Esophagus muscularis mucosa (tissue), 4 donors: ENCODE measurements at regions of chr4 and their contacts with region 1.

Region 1: DNA sequence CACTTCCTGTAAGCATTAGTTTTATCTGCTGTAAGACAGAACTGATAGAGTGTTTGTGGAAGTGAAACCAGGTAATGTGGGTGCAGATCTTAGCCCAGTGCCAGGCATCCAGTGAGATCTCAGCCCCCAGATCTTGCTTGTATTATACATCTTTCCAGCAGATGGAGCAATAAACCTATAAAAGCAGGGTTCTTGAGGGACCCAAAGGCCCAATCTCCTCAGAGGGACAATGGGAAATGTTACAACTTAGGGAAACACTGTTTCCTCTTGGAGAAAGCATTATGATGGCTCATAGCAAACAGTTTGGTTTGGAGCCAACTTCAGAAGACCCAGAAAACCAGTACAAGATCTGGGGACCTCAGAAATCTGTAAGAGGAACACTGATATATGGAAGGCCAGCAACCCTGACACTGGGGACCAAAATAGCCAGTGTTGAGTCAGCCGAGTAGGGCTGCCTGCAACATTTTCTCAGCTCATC is 206.3 kb downstream of the SLC7A11 start:
- DNase-seq: no peak
- H3K4me3 ChIP-seq: no peak overlapping the region
- H3K27ac ChIP-seq: no peak overlapping the region
- H3K4me1 ChIP-seq: peaks cover 0 to 3% (median 0%) of the 10 kb centered on the region in 4 donors
- H3K27me3 ChIP-seq: no peaks in the 10 kb centered on the region
- CTCF ChIP-seq: peak; percentile 56 to 62 (median 58)
- EP300 ChIP-seq: no peak
- POLR2A ChIP-seq: no peak

Region 2: GRCh38 chr4:136881666-136882065 is 1154.2 kb before region 1 on chr4:
- intact Hi-C with region 1: no loop called
- DNase-seq: no peak
- H3K4me3 ChIP-seq: no peak overlapping the region
- H3K27ac ChIP-seq: no peak overlapping the region
- H3K4me1 ChIP-seq: no peaks in the 10 kb centered on the region
- H3K27me3 ChIP-seq: no peaks in the 10 kb centered on the region
- CTCF ChIP-seq: no peak
- EP300 ChIP-seq: no peak
- POLR2A ChIP-seq: no peak

Region 3: GRCh38 chr4:138090150-138090917 is 54.5 kb after region 1 on chr4:
- intact Hi-C with region 1: loop called (anchors 5 kb)
- DNase-seq: no peak
- H3K4me3 ChIP-seq: peak overlapping the region; percentile 29 to 47 (median 34)
- H3K27ac ChIP-seq: no peak overlapping the region
- H3K4me1 ChIP-seq: peaks cover 7 to 29% (median 16%) of the 10 kb centered on the region in 4 donors
- H3K27me3 ChIP-seq: no peaks in the 10 kb centered on the region
- CTCF ChIP-seq: peak; percentile 69 to 86 (median 84)
- EP300 ChIP-seq: no peak
- POLR2A ChIP-seq: no peak

Region 4: DNA sequence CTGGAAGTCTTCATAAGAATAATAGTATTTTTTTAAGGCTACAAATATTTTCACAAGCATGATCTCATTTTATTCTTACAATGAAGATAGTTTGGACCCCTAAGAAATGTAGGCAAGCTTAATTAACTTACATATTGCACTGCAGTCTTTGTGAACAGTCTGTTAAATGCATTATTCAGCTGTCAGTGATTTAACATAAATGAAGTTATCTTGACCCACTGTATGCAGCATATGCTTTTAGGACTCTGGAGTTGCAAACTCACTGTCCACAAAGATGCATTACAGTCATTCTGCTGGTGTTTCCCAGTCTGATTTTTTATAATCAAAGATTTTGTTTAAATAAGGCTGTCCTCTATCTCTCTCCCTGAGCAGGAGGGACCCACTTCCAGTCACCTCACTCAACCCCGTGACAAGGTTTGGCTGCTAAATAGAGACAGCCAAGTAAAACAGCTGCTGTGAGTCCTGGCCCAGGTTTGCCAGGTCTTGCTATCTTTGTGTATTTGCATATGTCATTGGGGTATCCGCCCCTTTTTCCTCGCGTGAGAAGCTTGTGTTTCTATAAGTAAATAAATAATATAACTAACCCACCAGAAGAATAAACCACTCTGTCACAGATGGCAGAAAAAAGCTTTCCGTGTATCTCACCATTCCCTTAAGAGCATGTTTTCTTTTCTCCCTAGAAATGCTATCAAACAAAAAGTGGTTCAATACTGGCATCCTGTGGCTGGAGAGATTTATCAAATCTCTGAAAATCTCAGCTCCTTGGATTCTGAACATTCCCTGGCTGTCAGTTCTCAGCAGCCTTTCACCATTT is 139.4 kb after region 1 on chr4:
- intact Hi-C with region 1: loop called (anchors 5 kb)
- DNase-seq: no peak
- H3K4me3 ChIP-seq: no peak overlapping the region
- H3K27ac ChIP-seq: no peak overlapping the region
- H3K4me1 ChIP-seq: peaks cover 0 to 11% (median 7%) of the 10 kb centered on the region in 4 donors
- H3K27me3 ChIP-seq: no peaks in the 10 kb centered on the region
- CTCF ChIP-seq: peak in 1 of 3 experiments; percentile 4
- EP300 ChIP-seq: no peak
- POLR2A ChIP-seq: no peak